ENCODE measurements at regions of chr1 and their contacts with region 1.

Region 1: DNA sequence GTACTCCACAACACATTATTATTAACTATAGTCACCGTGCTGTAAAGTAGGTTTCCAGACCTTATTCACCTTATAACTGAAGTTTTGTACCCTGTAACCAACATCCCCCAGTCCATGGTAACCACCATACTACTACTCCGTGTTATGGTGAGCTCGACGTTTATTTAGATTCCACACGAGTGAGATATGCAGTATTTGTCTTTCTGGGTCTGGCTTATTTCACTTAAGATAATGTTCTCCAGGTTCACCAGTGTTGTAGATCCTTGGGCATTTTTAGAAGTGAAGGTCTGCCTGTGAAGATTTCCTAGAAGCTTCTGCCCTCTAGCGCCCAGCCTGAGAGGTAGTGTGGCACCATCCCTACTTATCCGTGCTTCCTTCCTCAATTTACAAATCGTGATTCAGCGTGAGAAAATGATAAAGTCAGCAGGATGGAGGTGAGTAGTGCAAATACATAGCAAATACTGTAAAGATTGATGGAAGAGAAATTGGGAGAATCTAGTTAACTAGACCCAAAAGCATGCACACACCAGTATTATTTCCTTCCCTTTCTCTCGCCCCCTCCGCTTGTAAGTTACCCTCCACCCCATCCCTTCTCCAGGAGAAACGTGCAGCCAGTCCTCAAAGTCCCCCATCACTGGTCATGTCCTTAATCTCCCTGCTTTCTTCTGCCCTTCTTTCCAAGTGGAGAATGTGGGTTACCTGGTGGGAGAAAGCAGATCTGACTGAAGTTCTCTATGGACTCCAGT is 36.0 kb upstream of the DISC1 start:
- DNase-seq: peak; percentile 68
- H3K4me3 Mint-ChIP-seq: no peak overlapping the region
- H3K27ac Mint-ChIP-seq: no peak overlapping the region
- H3K4me1 Mint-ChIP-seq: no peaks in the 10 kb centered on the region
- H3K27me3 Mint-ChIP-seq: no peaks in the 10 kb centered on the region
- CTCF ChIP-seq: peak; percentile 77

Region 2: DNA sequence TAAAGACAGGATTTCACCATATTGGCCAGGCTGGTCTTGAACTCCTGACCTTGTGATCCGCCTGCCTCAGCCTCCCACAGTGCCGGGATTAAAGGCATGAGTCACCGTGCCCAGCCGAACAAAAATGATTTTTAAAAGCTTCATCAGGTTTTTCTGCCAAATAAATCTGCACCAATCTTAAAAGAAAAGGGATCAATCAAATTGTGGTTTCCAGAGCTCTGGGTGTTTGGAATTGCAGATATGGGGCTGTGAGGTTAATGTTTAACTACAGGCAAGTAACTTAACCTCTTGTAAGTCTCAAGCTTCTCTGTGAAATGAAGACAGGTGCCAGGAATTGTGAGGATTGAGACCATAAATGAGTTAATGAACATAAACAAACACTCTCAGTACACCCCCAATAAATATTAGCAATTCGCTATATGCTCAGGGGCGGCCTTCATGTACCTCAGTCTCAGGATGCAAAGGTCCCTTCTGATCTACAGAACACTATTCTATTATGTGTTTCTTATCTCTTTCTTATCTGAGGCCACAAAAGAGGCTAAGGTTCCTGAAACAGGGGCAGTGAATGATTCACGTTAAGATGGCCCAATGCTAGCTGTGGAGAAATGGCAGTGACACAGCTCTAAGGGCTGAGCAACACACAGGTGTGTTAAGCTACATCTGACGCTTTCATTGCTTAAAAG is 356.8 kb before region 1 on chr1:
- CTCF ChIA-PET with region 1: no interaction called
- intact Hi-C with region 1: loop called (anchors 2 kb)
- DNase-seq: peak; percentile 66
- H3K4me3 Mint-ChIP-seq: peak overlapping the region; percentile 46
- H3K27ac Mint-ChIP-seq: peak overlapping the region; percentile 87
- H3K4me1 Mint-ChIP-seq: peaks cover 36% of the 10 kb centered on the region
- H3K27me3 Mint-ChIP-seq: no peaks in the 10 kb centered on the region
- CTCF ChIP-seq: no peak